Activated CD4-positive, alpha-beta T cell treated with anti-CD3 and anti-CD28 coated beads for 36 hours (primary cell): ENCODE measurements at regions of chr6 and their contacts with region 1.

Region 1: GRCh38 chr6:107674995-107675738 is 148.9 kb downstream of the SCML4 start:
- DNase-seq: peak; percentile 95
- ATAC-seq: peak; percentile 98
- H3K4me3 Mint-ChIP-seq: peak overlapping the region; percentile 33
- H3K27ac Mint-ChIP-seq: peak overlapping the region; percentile 81
- H3K4me1 Mint-ChIP-seq: peaks cover 10% of the 10 kb centered on the region
- H3K27me3 Mint-ChIP-seq: no peaks in the 10 kb centered on the region

Region 2: GRCh38 chr6:107132330-107132954 is 542.7 kb before region 1 on chr6:
- CTCF ChIA-PET with region 1: no interaction called
- POLR2A ChIA-PET with region 1: no interaction called
- intact Hi-C with region 1: loop called in 1 of 2 experiments (anchors 1 kb)
- DNase-seq: peak; percentile 50
- ATAC-seq: no peak
- H3K4me3 Mint-ChIP-seq: no peak overlapping the region
- H3K27ac Mint-ChIP-seq: no peak overlapping the region
- H3K4me1 Mint-ChIP-seq: no peaks in the 10 kb centered on the region
- H3K27me3 Mint-ChIP-seq: no peaks in the 10 kb centered on the region

Region 3: DNA sequence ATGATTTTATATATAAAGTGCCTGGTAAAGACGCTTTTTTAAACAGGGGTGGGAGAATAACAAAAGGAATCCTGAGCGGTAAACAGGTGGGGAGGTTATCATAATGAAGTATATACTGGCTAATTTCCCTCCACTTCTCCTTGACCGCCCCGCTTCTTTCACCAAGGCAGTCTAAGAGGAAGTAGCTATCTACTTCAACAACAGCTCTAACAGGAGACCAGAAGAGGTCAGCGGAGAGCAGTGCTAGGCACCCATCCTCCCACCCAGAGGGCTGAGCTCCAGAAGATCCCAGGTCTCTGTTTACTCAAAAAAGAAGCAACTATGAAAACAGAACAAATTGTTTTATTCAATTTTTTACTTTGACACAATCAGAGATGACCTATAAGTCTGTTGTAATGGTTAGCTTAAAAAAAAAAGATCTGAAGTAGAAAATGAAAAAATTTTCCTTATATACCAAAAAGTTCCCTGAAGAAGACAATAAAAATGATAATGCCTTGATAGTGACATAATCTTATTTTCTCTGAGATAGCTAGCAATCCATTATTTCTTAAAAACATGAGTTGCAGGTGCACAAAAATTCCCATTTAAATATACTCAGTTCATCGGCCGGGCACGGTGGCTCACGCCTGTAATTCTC is 356.9 kb before region 1 on chr6:
- CTCF ChIA-PET with region 1: interaction called, 3 read pairs
- POLR2A ChIA-PET with region 1: no interaction called
- intact Hi-C with region 1: loop called in 1 of 2 experiments (anchors 1 kb)
- DNase-seq: peak; percentile 71
- ATAC-seq: peak; percentile 72
- H3K4me3 Mint-ChIP-seq: no peak overlapping the region
- H3K27ac Mint-ChIP-seq: no peak overlapping the region
- H3K4me1 Mint-ChIP-seq: peaks cover 18% of the 10 kb centered on the region
- H3K27me3 Mint-ChIP-seq: no peaks in the 10 kb centered on the region

Region 4: DNA sequence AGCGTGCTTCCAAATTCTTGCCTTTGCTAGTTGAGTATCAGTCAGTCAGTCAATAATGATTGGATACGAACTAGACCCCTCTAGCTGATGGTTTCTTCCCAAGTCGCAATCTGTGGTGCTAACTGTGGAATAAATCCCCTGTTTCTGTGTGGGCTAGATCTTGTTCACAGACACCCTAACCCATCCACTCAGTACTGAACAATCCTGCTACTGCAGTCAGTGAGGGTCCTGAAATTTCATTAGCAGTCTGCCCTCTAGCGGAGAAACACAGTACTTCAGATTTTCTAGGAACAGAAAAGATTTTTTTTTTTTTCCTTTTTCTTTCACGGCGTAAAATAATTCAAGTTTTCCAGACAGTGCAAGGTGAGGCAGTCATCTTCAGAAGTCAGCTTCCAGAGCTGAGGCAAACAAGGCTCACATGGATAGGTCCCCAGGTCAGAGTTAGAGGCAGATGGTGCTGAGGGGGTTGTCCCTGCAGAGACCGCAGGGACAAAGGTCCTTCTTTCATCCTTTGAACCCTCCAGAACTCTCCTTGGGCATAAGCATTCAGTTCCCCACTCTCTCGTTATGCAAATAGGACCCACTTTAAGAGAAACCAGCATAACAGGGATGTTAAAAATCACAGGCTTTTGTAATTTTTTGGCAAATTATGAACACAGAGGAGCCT is 29.3 kb after region 1 on chr6:
- CTCF ChIA-PET with region 1: interaction called, 9 read pairs
- POLR2A ChIA-PET with region 1: no interaction called
- intact Hi-C with region 1: loop called (anchors 1 to 2 kb)
- DNase-seq: peak; percentile 28
- ATAC-seq: no peak
- H3K4me3 Mint-ChIP-seq: no peak overlapping the region
- H3K27ac Mint-ChIP-seq: no peak overlapping the region
- H3K4me1 Mint-ChIP-seq: peaks cover 26% of the 10 kb centered on the region
- H3K27me3 Mint-ChIP-seq: no peaks in the 10 kb centered on the region

Region 5: DNA sequence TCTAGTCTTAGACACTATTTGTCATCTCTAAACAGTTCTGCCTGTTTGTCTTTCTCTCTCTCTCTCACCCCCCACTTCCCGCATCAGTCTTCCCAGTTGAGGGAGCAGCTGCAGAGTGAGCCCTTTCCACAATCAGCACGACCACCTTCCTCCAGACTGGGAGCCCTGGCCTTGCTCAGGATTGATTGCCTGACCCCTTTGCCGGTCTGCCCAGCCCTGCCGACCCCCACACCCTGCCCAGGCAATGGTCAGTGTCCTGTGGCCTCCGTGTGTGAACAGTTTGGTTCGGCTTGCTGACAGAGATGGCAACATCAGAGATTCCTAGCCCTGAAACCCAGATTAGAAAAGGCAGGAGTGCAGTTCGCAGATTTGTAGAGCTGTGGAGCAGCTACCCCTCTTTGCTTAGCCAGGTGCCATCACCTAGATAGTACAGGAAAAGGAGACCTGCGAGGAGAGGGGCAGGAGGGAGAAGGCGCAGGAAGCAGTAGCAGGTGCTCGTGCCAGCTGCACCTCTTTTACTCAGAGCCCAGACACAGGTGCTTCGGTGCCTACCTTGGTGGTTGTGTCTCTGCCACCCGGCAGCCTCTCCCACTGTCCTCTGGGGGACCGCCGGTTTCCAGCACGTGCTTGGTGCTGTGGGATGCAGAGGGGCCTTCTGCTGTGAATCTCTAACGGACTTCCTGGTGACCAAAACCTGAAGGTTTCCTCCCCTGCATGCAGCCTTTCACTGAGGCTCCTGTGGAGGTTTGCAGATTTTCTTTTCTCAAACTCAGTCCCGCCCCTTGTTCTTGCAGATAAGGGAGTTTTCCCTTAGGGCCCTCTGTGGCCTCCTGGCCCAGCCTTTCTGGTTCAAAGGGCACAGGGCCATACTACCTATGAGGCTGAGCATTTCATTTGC is 56.5 kb after region 1 on chr6:
- CTCF ChIA-PET with region 1: interaction called, 4 read pairs
- POLR2A ChIA-PET with region 1: no interaction called
- intact Hi-C with region 1: loop called (anchors 2 to 5 kb)
- DNase-seq: peak; percentile 46
- ATAC-seq: peak; percentile 20
- H3K4me3 Mint-ChIP-seq: peak overlapping the region; percentile 79
- H3K27ac Mint-ChIP-seq: peak overlapping the region; percentile 91
- H3K4me1 Mint-ChIP-seq: peaks cover 82% of the 10 kb centered on the region
- H3K27me3 Mint-ChIP-seq: no peaks in the 10 kb centered on the region

Region 6: DNA sequence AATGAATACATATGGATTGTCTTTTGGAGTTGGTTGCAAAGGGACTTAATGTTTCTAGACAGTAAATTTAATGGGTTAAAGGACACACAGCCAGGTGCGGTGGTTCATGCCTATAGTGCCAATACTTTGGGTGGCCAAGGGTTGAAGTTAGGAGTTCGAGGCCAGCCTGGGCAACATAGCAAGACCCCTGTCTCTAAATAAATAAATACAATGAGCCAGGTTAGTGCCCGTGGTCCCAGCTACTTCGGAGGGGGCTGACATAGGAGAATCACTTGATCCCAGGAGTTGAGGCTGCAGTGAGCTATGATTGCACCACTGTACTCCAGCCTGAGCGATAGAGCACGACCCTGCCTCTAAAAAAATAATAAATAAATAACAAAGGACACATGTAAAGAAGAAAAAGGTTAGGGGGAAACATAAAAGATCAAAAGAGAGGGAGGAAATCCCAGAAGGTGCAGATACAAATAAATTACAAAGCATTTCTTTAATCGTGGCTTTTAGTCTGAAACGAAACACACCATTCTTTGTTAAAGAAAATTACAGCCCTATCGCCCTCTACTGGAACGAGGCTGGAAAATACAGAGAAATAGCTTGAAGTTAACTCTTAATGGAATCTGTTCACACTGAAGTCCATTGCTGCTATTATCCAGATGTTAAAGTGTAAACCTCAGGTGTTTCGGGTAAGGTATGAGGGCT is 191.6 kb after region 1 on chr6:
- CTCF ChIA-PET with region 1: interaction called, 27 read pairs
- POLR2A ChIA-PET with region 1: no interaction called
- intact Hi-C with region 1: loop called (anchors 1 kb)
- DNase-seq: peak; percentile 38
- ATAC-seq: peak; percentile 43
- H3K4me3 Mint-ChIP-seq: no peak overlapping the region
- H3K27ac Mint-ChIP-seq: no peak overlapping the region
- H3K4me1 Mint-ChIP-seq: peaks cover 30% of the 10 kb centered on the region
- H3K27me3 Mint-ChIP-seq: no peaks in the 10 kb centered on the region

Region 7: DNA sequence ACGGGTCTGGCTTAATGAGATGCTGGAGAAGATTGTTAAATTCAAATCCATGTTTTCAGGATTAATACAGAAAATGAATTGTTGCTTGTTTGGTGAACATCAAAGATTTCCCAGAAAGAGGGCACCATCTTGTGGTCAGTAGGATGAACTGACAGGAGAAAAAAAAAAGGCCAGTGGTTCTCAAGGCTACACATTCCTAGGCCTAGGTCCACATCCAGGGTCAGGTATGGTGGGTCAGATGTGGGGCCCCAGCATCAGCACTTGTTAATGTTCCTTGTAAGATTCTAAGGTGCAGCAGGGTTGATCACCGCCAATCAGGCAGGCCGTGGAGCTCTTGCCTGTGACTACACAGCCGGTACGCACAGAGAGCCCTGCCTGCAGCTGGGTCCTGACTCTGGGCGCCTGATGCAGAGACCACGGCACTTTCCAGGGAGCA is 851.6 kb after region 1 on chr6:
- CTCF ChIA-PET with region 1: no interaction called
- POLR2A ChIA-PET with region 1: no interaction called
- intact Hi-C with region 1: loop called in 1 of 2 experiments (anchors 10 kb)
- DNase-seq: no peak
- ATAC-seq: no peak
- H3K4me3 Mint-ChIP-seq: no peak overlapping the region
- H3K27ac Mint-ChIP-seq: no peak overlapping the region
- H3K4me1 Mint-ChIP-seq: no peaks in the 10 kb centered on the region
- H3K27me3 Mint-ChIP-seq: no peaks in the 10 kb centered on the region